B cell (primary cell): ENCODE measurements at regions of chr6 and their contacts with region 1.

Region 1: DNA sequence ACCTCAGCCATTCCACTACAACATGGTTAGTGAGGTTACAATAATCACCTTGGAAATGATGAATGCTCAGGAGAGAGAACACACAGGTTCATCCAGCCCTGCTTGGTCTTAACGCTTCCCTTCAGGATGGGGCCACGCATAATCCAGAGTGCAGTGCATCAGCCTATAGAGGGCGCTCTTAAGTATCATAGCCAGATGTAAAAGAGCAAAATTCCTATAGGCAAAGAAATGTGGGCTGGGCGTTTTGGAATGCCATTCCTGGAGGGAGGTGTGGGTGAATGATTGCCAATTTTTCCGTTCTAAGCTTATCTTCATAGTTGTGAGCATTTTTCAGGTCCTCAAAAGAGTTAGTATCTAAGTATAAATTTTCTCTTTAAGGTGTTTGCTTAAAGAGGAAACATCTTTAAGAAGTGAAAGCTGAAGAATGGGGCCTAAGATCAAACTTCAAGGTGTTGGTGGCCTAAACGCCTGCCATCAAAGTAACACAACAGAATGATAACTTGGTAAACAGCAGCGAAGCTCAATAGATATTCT is 1.8 kb downstream of the RIPOR2 start:
- DNase-seq: peak; percentile 83
- ATAC-seq: peak; percentile 9
- H3K4me3 ChIP-seq: peak overlapping the region; percentile 72 to 100 (median 86)
- H3K4me3 Mint-ChIP-seq: peak overlapping the region; percentile 95
- H3K27ac ChIP-seq: peak overlapping the region; percentile 74 to 93
- H3K27ac Mint-ChIP-seq: peak overlapping the region; percentile 90
- H3K4me1 ChIP-seq: peaks cover 54% of the 10 kb centered on the region in 2 donors
- H3K4me1 Mint-ChIP-seq: peaks cover 68% of the 10 kb centered on the region
- H3K27me3 ChIP-seq: no peaks in the 10 kb centered on the region
- H3K27me3 Mint-ChIP-seq: no peaks in the 10 kb centered on the region
- CTCF ChIP-seq: peak; percentile 89

Region 2: DNA sequence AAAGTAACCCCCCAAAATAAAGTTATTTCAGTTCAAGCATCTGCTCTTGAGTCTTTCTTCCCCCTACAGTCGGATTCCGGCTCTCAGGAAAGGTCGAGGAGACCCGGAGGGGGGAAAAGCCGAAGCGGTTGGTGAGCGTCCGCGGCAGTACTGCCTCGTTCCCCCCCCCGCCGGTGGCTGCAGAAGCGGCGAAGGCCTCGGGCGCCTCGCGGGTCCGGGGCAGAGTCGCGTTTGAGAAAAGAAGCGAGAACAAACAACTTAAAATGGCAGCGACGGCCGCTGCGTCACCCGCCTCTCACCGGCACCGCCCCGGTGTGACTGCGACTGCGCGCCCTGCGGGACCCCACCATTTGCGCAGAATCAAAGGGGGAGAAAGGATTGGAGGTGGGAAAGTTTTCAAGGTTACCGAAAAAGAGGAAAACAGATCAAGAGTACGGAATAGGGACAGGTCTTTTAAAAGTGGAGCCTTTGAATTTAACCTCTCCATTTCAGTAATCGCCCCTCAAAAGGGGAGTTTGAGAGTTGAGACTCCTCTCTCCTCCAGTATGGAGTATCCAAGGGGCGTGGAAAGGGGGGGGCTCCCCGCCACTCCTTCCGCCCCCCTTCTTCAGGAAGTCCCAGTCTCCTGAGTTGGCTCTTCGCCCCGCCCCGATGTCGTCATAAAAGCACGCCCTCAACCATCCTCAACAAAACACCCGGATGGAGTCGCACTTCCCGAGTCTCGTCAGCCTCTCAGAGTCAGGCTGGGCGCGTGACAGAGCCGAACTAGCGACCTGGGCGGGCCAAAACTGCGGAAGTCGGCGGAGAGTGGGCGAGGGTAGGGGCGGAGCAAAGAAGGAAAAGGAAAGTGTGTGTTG is 213.1 kb before region 1 on chr6:
- CTCF ChIA-PET with region 1: no interaction called
- POLR2A ChIA-PET with region 1: no interaction called
- intact Hi-C with region 1: loop called (anchors 5 kb)
- DNase-seq: peak; percentile 100
- ATAC-seq: peak; percentile 80
- H3K4me3 ChIP-seq: peak overlapping the region; percentile 87 to 99 (median 88)
- H3K4me3 Mint-ChIP-seq: peak overlapping the region; percentile 89
- H3K27ac ChIP-seq: peak overlapping the region; percentile 99
- H3K27ac Mint-ChIP-seq: peak overlapping the region; percentile 100
- H3K4me1 ChIP-seq: peaks cover 40 to 41% of the 10 kb centered on the region in 2 donors
- H3K4me1 Mint-ChIP-seq: peaks cover 46% of the 10 kb centered on the region
- H3K27me3 ChIP-seq: no peaks in the 10 kb centered on the region
- H3K27me3 Mint-ChIP-seq: no peaks in the 10 kb centered on the region
- CTCF ChIP-seq: no peak

Region 3: DNA sequence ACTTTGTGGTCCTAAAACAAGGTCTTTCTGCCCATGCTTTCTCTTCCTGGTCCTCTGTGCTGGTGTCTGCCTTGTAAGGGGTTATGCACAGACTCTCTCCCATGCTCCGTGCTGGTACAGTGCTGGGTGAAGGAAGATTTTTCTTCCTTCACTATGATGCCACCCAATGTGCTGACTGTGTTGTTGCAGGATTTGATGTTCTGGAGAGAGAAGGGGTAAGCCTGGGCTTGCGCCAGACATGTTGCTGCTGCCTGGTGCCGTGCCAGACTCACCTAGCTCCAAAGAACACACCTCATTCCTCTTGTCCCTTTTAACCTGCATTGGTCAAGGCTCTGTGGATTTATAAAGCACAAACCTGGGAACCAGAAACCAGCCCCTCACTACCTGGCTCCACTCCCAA is 106.8 kb before region 1 on chr6:
- CTCF ChIA-PET with region 1: no interaction called
- POLR2A ChIA-PET with region 1: no interaction called
- intact Hi-C with region 1: no loop called
- DNase-seq: no peak
- ATAC-seq: no peak
- H3K4me3 ChIP-seq: no peak overlapping the region
- H3K4me3 Mint-ChIP-seq: no peak overlapping the region
- H3K27ac ChIP-seq: peak overlapping the region in 1 of 2 donors; percentile 27
- H3K27ac Mint-ChIP-seq: peak overlapping the region; percentile 46
- H3K4me1 ChIP-seq: no peaks in the 10 kb centered on the region
- H3K4me1 Mint-ChIP-seq: peaks cover 2% of the 10 kb centered on the region
- H3K27me3 ChIP-seq: no peaks in the 10 kb centered on the region
- H3K27me3 Mint-ChIP-seq: no peaks in the 10 kb centered on the region
- CTCF ChIP-seq: no peak

Region 4: GRCh38 chr6:24902782-24903181 is 31.2 kb before region 1 on chr6:
- CTCF ChIA-PET with region 1: interaction called, 134 read pairs
- POLR2A ChIA-PET with region 1: no interaction called
- intact Hi-C with region 1: loop called (anchors 5 kb)
- DNase-seq: no peak
- ATAC-seq: no peak
- H3K4me3 ChIP-seq: no peak overlapping the region
- H3K4me3 Mint-ChIP-seq: peak overlapping the region; percentile 13
- H3K27ac ChIP-seq: peak overlapping the region; percentile 3 to 93
- H3K27ac Mint-ChIP-seq: peak overlapping the region; percentile 85
- H3K4me1 ChIP-seq: peaks cover 88 to 91% of the 10 kb centered on the region in 2 donors
- H3K4me1 Mint-ChIP-seq: peaks cover 88% of the 10 kb centered on the region
- H3K27me3 ChIP-seq: no peaks in the 10 kb centered on the region
- H3K27me3 Mint-ChIP-seq: no peaks in the 10 kb centered on the region
- CTCF ChIP-seq: no peak

Region 5: DNA sequence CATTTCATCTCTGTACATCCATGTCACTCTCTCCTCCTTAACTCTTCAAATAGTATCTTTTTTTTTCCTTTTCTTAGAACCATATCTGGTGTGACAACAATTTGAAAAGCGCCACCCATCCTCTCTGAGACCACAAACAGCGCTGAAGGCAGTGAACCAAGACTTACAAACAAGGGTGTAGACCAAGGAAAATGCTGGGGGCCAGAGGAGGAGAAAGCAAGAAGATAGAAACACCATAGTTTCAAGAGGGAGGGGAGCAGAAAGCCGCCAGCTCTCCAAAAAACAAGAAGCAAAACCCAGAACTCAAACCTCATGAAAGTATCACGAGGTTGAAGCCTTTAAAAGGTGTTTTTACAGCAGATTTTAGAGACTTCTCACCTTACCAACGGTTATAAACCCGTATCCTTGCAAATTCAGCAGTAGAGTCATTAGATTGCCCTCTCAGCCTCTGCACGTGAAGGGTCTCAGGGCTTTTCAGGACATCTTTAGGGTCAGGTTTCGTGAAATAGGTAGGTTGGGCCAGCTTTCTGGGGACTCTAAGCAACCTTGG is 15.2 kb after region 1 on chr6:
- CTCF ChIA-PET with region 1: interaction called, 227 read pairs
- POLR2A ChIA-PET with region 1: interaction called, 229 read pairs
- intact Hi-C with region 1: loop called (anchors 1 kb)
- DNase-seq: peak; percentile 91
- ATAC-seq: peak; percentile 90
- H3K4me3 ChIP-seq: peak overlapping the region in 3 of 5 experiments; percentile 15 to 58 (median 31)
- H3K4me3 Mint-ChIP-seq: peak overlapping the region; percentile 79
- H3K27ac ChIP-seq: peak overlapping the region; percentile 92 to 93
- H3K27ac Mint-ChIP-seq: peak overlapping the region; percentile 98
- H3K4me1 ChIP-seq: peaks cover 79 to 84% of the 10 kb centered on the region in 2 donors
- H3K4me1 Mint-ChIP-seq: peaks cover 73% of the 10 kb centered on the region
- H3K27me3 ChIP-seq: no peaks in the 10 kb centered on the region
- H3K27me3 Mint-ChIP-seq: no peaks in the 10 kb centered on the region
- CTCF ChIP-seq: no peak

Region 6: DNA sequence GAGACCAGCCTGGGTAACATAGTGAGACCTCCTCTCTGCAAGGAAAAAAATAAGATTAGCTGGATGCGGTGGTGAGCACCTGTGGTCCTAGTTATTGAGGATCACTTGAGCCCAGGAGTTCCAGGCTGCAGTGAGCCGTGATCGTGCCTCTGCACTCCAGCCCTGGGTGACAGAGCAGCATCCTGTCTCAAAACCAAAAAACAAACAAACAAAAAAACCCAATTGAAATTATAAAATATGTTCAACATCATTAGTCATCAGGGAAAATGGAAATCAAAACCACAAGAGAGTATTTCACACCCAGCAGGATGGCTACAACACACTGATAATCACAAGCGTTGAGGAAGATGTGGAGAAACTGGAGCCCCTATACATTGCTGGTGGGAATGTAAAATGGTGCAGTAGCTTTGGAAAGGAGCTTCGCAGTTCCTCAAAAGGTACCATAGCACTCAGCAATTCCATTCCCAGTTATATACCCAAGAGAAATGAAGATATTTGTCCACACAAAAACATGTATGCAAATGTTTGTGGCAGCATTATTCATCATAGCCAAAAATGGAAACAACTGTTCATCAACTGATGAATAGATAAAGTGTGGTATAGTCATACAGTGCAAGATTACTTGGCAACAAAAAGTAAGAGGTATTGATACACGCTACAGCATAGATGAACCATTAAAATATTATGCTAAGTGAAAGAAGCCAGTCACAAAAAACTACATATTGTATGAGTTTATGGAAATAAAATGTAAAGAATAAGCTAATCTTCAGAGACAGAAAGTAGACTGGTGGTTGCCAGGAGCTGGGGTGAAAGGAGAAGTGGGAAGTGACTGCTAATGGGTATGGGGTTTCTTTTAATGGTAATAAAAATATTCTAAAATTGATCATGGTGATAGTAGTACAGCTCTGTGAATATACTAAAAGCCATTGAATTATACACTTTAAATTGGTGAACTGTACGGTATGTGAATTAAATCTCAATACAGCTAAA is 40.5 kb after region 1 on chr6:
- CTCF ChIA-PET with region 1: interaction called, 23 read pairs
- POLR2A ChIA-PET with region 1: interaction called, 6 read pairs
- intact Hi-C with region 1: no loop called
- DNase-seq: peak; percentile 43
- ATAC-seq: peak; percentile 79
- H3K4me3 ChIP-seq: peak overlapping the region in 1 of 5 experiments; percentile 33
- H3K4me3 Mint-ChIP-seq: peak overlapping the region; percentile 76
- H3K27ac ChIP-seq: peak overlapping the region; percentile 42 to 50
- H3K27ac Mint-ChIP-seq: peak overlapping the region; percentile 90
- H3K4me1 ChIP-seq: peaks cover 34 to 42% of the 10 kb centered on the region in 2 donors
- H3K4me1 Mint-ChIP-seq: peaks cover 65% of the 10 kb centered on the region
- H3K27me3 ChIP-seq: no peaks in the 10 kb centered on the region
- H3K27me3 Mint-ChIP-seq: no peaks in the 10 kb centered on the region
- CTCF ChIP-seq: no peak

Region 7: DNA sequence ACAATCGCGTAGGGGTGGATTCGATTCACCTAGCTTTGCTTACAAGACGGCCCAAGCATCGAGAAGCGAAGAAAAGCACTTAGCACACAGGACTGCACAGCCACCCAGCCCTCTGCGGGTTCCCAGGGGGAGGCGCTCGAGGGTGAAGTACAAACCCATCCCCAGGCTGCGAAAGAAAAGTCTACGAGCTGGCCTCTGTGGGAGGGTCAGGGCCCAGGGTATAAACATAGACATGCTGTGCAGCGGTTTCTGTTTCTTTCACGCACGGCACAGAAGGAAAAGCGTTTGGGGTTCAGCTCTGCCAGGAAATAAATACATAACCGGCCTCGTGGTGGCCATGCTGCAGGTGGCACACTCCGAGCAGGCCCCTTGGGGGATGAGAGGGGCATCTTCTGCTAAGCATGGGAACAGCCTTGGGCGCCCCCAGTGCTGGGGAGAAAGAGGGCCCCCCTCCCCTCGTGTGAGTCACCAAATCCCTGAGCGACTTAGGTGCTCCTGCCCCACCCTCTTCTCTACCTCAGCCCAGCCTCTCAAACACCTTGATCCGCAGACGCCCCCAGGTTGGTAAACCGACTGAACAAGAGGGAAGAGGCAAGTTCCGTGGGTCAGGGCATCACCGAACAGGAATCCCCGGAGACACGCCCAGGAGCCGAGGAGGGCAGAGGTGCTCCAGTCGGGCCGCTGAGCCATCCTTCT is 93.4 kb after region 1 on chr6:
- CTCF ChIA-PET with region 1: interaction called, 31 read pairs
- POLR2A ChIA-PET with region 1: no interaction called
- intact Hi-C with region 1: no loop called
- DNase-seq: peak; percentile 83
- ATAC-seq: peak; percentile 95
- H3K4me3 ChIP-seq: peak overlapping the region in 4 of 5 experiments; percentile 14 to 56 (median 46)
- H3K4me3 Mint-ChIP-seq: peak overlapping the region; percentile 90
- H3K27ac ChIP-seq: peak overlapping the region; percentile 60 to 63
- H3K27ac Mint-ChIP-seq: peak overlapping the region; percentile 90
- H3K4me1 ChIP-seq: peaks cover 16 to 18% of the 10 kb centered on the region in 2 donors
- H3K4me1 Mint-ChIP-seq: peaks cover 40% of the 10 kb centered on the region
- H3K27me3 ChIP-seq: no peaks in the 10 kb centered on the region
- H3K27me3 Mint-ChIP-seq: no peaks in the 10 kb centered on the region
- CTCF ChIP-seq: peak; percentile 65

Region 8: DNA sequence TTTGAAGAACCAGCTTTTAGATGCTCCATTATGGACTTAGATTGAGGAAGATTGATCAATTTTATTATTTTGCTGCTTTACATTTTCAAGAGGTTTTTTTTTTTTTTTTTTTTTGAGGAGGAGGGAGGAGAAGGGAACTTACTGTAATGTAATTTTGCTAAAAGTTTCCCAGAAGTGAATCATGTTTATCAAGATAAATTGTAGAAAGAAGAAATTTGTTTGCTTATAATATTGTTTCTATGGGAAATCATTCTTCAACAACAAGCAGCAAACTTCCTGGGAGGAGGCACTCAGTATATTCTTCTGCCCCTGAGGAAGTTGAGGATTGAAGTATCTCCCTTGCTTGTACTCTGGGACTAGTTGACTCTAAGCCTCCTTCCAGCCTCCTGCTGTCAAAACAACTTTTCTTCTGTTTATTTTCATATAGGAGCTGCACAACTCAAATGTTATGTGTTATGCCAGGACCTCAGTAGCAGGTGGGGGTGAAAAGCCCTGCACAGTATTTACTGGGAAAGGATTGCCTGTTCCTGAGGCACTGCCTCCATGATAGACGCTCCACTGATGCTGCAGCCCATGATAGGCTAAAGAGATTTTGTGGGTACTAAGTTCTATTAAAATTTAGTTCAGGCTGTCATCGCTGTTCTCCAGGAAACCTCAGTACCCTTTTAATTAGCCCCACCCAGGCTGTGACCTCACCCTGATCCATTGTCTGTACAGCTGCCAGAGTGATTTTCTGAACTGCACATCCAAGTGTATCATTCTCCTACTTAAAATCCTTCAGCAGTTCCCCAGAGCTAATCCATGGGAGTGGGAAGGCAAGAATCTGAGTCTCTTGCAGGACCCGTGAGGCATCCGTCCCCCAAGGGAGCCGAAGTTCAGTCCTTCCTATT is 397.1 kb after region 1 on chr6:
- CTCF ChIA-PET with region 1: no interaction called
- POLR2A ChIA-PET with region 1: no interaction called
- intact Hi-C with region 1: no loop called
- DNase-seq: no peak
- ATAC-seq: no peak
- H3K4me3 ChIP-seq: no peak overlapping the region
- H3K4me3 Mint-ChIP-seq: no peak overlapping the region
- H3K27ac ChIP-seq: no peak overlapping the region
- H3K27ac Mint-ChIP-seq: no peak overlapping the region
- H3K4me1 ChIP-seq: peaks cover 31 to 32% of the 10 kb centered on the region in 2 donors
- H3K4me1 Mint-ChIP-seq: peaks cover 47% of the 10 kb centered on the region
- H3K27me3 ChIP-seq: peaks cover 0 to 3% (median 0%) of the 10 kb centered on the region in 4 experiments
- H3K27me3 Mint-ChIP-seq: peaks cover under 1% of the 10 kb centered on the region
- CTCF ChIP-seq: no peak